GM12878 (cell line): ENCODE measurements at regions of chr16 and their contacts with region 1.

Region 1: GRCh38 chr16:89560378-89561141 is at the start of gene RPL13:
- DNase-seq: peak; percentile 67
- ATAC-seq: peak; percentile 90
- H3K4me3 ChIP-seq: peak within 1 kb of the TSS; percentile 89
- H3K27ac ChIP-seq: peak within 1 kb of the TSS; percentile 81
- H3K4me1 ChIP-seq: peaks cover 20% of the 10 kb centered on the region
- H3K27me3 ChIP-seq: no peaks in the 10 kb centered on the region
- CTCF ChIP-seq: no peak
- EP300 ChIP-seq: no peak
- POLR2A ChIP-seq: peak; percentile 99
- RAD21 ChIP-seq: no peak
- polyA plus RNA-seq, gene RPL13: 386 to 1,247 TPM

Region 2: GRCh38 chr16:89241187-89242007 is 319.2 kb before region 1 on chr16:
- CTCF ChIA-PET with region 1: no interaction called
- POLR2A ChIA-PET with region 1: no interaction called
- RAD21 ChIA-PET with region 1: no interaction called
- SMC1A ChIA-PET with region 1: interaction called, 3 read pairs
- in situ Hi-C with region 1: no loop called
- intact Hi-C with region 1: loop called (anchors 5 kb)
- DNase-seq: peak; percentile 57
- ATAC-seq: peak; percentile 86
- H3K4me3 ChIP-seq: peak overlapping the region; percentile 72
- H3K27ac ChIP-seq: peak overlapping the region; percentile 96
- H3K4me1 ChIP-seq: no peaks in the 10 kb centered on the region; the same call in 1 of the 2 replicates
- H3K27me3 ChIP-seq: no peaks in the 10 kb centered on the region
- CTCF ChIP-seq: no peak
- EP300 ChIP-seq: no peak
- POLR2A ChIP-seq: peak; percentile 94
- RAD21 ChIP-seq: no peak

Region 3: DNA sequence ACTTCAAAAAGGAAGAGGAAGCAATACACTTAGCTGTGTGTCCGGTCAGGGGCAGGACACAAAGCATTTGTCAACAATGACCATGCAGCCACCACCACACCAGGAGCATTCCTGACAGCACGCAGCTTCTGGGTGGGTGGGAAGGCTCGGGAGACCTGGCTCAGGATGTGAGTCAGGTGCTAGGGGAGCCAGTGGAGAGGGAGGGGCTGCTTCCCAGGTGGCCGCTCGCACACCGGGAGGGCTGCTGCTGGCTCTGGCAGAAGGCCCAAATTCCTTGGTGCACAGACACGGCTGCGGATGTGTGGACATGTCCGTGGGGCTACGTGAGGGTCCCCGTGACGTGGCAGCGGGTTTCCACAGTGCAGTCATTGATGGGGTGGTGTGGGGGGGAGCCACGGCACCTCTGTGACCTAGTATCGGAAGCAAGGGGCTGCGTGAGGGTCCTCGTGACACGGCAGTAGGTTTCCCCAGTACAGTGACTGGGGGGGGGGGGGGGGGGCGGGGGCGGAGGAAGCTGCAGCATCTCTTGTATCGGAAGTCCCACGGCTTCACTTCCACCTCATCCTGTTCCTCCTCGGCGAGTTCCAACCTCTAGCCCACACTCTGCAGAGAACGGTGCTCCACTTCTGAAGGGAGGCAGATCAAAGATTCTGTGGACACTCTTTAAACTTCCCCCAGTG is 230.2 kb before region 1 on chr16:
- CTCF ChIA-PET with region 1: interaction called, 4 read pairs
- POLR2A ChIA-PET with region 1: interaction called, 4 read pairs
- RAD21 ChIA-PET with region 1: interaction called, 3 read pairs
- SMC1A ChIA-PET with region 1: no interaction called
- in situ Hi-C with region 1: loop called (anchors 5 kb)
- intact Hi-C with region 1: loop called (anchors 2 kb)
- DNase-seq: no peak
- ATAC-seq: no peak
- H3K4me3 ChIP-seq: no peak overlapping the region
- H3K27ac ChIP-seq: no peak overlapping the region
- H3K4me1 ChIP-seq: peaks cover 39% of the 10 kb centered on the region
- H3K27me3 ChIP-seq: no peaks in the 10 kb centered on the region
- CTCF ChIP-seq: no peak
- EP300 ChIP-seq: no peak
- POLR2A ChIP-seq: peak; percentile 35; the same call in 1 of the 2 replicates
- RAD21 ChIP-seq: no peak

Region 4: GRCh38 chr16:89507834-89508590 is 52.5 kb before region 1 on chr16 and contains the start of gene SPG7:
- CTCF ChIA-PET with region 1: interaction called, 5 read pairs
- POLR2A ChIA-PET with region 1: interaction called, 4 read pairs
- RAD21 ChIA-PET with region 1: no interaction called
- SMC1A ChIA-PET with region 1: no interaction called
- in situ Hi-C with region 1: no loop called
- intact Hi-C with region 1: loop called (anchors 2 kb)
- DNase-seq: peak; percentile 51
- ATAC-seq: peak; percentile 87
- H3K4me3 ChIP-seq: peak within 1 kb of the TSS; percentile 96
- H3K27ac ChIP-seq: peak within 1 kb of the TSS; percentile 80
- H3K4me1 ChIP-seq: peaks cover 21% of the 10 kb centered on the region
- H3K27me3 ChIP-seq: no peaks in the 10 kb centered on the region
- CTCF ChIP-seq: no peak
- EP300 ChIP-seq: no peak
- POLR2A ChIP-seq: peak; percentile 85
- RAD21 ChIP-seq: no peak
- polyA plus RNA-seq, gene SPG7: 5.9 to 9.8 TPM